B cell (primary cell): ENCODE measurements at regions of chr6 and their contacts with region 1.

Region 1: GRCh38 chr6:36851149-36851614 is 11.9 kb upstream of the CPNE5 start:
- DNase-seq: peak; percentile 69
- ATAC-seq: peak; percentile 43
- H3K4me3 ChIP-seq: no peak overlapping the region
- H3K4me3 Mint-ChIP-seq: no peak overlapping the region
- H3K27ac ChIP-seq: no peak overlapping the region
- H3K27ac Mint-ChIP-seq: no peak overlapping the region
- H3K4me1 ChIP-seq: peaks cover 0 to 8% of the 10 kb centered on the region in 2 donors
- H3K4me1 Mint-ChIP-seq: peaks cover 8% of the 10 kb centered on the region
- H3K27me3 ChIP-seq: peaks cover 0 to 11% (median 5%) of the 10 kb centered on the region in 4 experiments
- H3K27me3 Mint-ChIP-seq: peaks cover 3% of the 10 kb centered on the region
- CTCF ChIP-seq: peak; percentile 83

Region 2: DNA sequence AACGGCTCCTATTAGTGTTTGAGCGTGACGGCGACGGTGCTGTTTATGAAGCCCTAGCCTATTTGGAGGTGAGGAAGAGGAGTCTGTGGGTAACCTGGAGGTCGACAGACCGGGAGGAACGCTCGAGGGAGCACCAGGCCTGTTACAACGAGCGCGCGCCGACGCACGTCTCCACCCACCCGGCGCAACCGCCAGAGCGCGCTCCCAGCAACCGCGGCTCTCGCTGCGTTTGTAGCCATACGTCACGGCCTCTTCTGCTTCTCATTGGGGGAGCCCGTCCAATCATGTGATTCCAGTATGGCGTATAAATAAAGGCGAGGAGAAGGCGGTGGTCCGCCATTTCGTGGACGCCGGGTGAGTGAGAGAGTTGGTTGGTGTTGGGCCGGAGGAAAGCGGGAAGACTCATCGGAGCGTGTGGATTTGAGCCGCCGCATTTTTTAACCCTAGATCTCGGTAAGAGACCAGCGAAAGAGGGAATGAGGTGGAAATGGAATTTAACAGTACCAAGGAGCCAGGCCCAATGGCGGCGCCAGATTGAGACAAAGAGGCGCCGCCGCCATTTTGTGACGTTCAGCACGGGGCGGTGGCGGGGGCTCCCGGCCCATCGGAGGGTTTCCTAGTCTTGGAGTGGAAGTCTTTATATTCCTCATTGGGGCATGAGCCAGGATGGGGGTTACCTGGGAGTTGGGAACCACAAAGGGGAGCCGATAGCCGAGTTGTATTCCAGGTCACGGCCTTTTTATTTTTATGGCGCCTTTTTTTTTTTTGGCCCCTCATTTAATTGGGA is 257.0 kb before region 1 on chr6 and contains the start of gene SRSF3:
- CTCF ChIA-PET with region 1: no interaction called
- POLR2A ChIA-PET with region 1: no interaction called
- intact Hi-C with region 1: no loop called
- DNase-seq: peak; percentile 99
- ATAC-seq: peak; percentile 91
- H3K4me3 ChIP-seq: peak within 1 kb of the TSS; percentile 91 to 100 (median 97)
- H3K4me3 Mint-ChIP-seq: peak within 1 kb of the TSS; percentile 90
- H3K27ac ChIP-seq: peak within 1 kb of the TSS; percentile 93 to 99
- H3K27ac Mint-ChIP-seq: peak within 1 kb of the TSS; percentile 97
- H3K4me1 ChIP-seq: peaks cover 44 to 55% of the 10 kb centered on the region in 2 donors
- H3K4me1 Mint-ChIP-seq: peaks cover 48% of the 10 kb centered on the region
- H3K27me3 ChIP-seq: no peaks in the 10 kb centered on the region
- H3K27me3 Mint-ChIP-seq: no peaks in the 10 kb centered on the region
- CTCF ChIP-seq: peak; percentile 29
- total RNA-seq, gene SRSF3: 316 and 331 TPM in 2 replicates

Region 3: GRCh38 chr6:36765594-36766398 is 85.4 kb before region 1 on chr6:
- CTCF ChIA-PET with region 1: interaction called, 92 read pairs
- POLR2A ChIA-PET with region 1: no interaction called
- intact Hi-C with region 1: loop called (anchors 1 kb)
- DNase-seq: peak; percentile 88
- ATAC-seq: peak; percentile 91
- H3K4me3 ChIP-seq: peak overlapping the region in 1 of 5 experiments; percentile 9
- H3K4me3 Mint-ChIP-seq: peak overlapping the region; percentile 60
- H3K27ac ChIP-seq: no peak overlapping the region
- H3K27ac Mint-ChIP-seq: peak overlapping the region; percentile 60
- H3K4me1 ChIP-seq: peaks cover 45 to 54% of the 10 kb centered on the region in 2 donors
- H3K4me1 Mint-ChIP-seq: peaks cover 41% of the 10 kb centered on the region
- H3K27me3 ChIP-seq: peaks cover 0 to 3% (median 0%) of the 10 kb centered on the region in 4 experiments
- H3K27me3 Mint-ChIP-seq: no peaks in the 10 kb centered on the region
- CTCF ChIP-seq: peak; percentile 92

Region 4: DNA sequence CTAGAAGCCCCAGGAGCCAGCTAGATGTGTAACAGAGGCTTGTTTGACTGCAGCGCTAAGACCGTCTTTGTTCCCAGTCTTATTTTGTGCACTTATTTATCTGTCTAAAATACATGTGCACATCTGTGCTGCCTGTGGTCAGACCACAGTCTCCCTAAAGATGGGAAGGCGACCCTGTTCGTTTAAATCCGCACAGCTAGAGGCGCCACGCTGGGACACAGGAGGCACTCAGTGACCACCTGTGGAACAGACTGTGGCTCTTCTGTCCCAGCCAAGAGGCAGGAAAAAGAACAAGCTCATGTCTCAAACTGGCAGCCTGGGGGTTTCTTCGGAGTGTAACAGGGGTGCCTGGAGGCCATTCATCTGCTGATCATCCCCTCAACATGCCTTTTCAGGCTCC is 78.8 kb before region 1 on chr6:
- CTCF ChIA-PET with region 1: interaction called, 92 read pairs
- POLR2A ChIA-PET with region 1: no interaction called
- intact Hi-C with region 1: no loop called
- DNase-seq: no peak
- ATAC-seq: no peak
- H3K4me3 ChIP-seq: no peak overlapping the region
- H3K4me3 Mint-ChIP-seq: no peak overlapping the region
- H3K27ac ChIP-seq: no peak overlapping the region
- H3K27ac Mint-ChIP-seq: no peak overlapping the region
- H3K4me1 ChIP-seq: peaks cover 25 to 27% of the 10 kb centered on the region in 2 donors
- H3K4me1 Mint-ChIP-seq: peaks cover 24% of the 10 kb centered on the region
- H3K27me3 ChIP-seq: peaks cover 0 to 9% (median under 1%) of the 10 kb centered on the region in 4 experiments
- H3K27me3 Mint-ChIP-seq: peaks cover 24% of the 10 kb centered on the region
- CTCF ChIP-seq: no peak

Region 5: DNA sequence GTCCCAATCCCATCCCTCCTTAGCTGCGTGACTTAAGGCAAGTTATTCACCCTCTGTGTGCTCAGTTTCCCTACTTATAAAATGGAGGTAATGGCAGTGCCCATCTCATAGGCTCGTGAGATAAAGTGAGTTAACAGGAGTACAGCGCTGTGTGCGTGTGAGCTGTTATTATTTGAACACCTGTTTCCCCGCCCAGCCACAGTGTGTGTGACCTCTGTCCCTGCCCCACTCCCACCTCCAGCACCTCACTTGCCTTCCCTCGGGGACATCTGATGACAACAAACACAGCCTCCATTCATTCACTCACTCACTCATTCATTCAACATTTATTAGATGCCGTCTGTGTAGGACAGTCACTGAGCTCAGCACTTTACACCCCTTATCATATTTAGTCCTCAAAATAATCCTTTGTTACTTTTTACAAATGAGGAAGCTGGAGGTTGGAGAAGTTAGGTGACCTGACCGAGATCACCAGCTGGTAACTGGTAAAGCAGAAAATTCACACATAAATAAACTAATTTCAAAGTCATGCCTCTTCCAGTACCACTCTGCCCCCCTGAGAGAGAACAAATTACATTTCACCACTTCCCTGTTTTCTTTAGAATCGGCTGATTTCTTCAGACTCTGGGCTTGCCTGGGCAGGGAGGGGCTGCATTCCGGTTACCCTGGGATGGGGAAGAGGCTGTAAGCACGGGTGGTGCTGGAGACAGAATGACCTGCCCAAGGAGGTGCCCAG is 70.6 kb before region 1 on chr6:
- CTCF ChIA-PET with region 1: interaction called, 22 read pairs
- POLR2A ChIA-PET with region 1: no interaction called
- intact Hi-C with region 1: no loop called
- DNase-seq: peak; percentile 54
- ATAC-seq: peak; percentile 42
- H3K4me3 ChIP-seq: no peak overlapping the region
- H3K4me3 Mint-ChIP-seq: peak overlapping the region; percentile 64
- H3K27ac ChIP-seq: peak overlapping the region in 1 of 2 donors; percentile 10
- H3K27ac Mint-ChIP-seq: peak overlapping the region; percentile 71
- H3K4me1 ChIP-seq: peaks cover 21 to 28% of the 10 kb centered on the region in 2 donors
- H3K4me1 Mint-ChIP-seq: peaks cover 27% of the 10 kb centered on the region
- H3K27me3 ChIP-seq: peaks cover 0 to 9% (median 0%) of the 10 kb centered on the region in 4 experiments
- H3K27me3 Mint-ChIP-seq: peaks cover 17% of the 10 kb centered on the region
- CTCF ChIP-seq: no peak

Region 6: GRCh38 chr6:36874443-36875249 is 23.5 kb after region 1 on chr6 and contains the start of gene PPIL1:
- CTCF ChIA-PET with region 1: interaction called, 20 read pairs
- POLR2A ChIA-PET with region 1: no interaction called
- intact Hi-C with region 1: no loop called
- DNase-seq: peak; percentile 96
- ATAC-seq: peak; percentile 93
- H3K4me3 ChIP-seq: peak within 1 kb of the TSS; percentile 73 to 100 (median 99)
- H3K4me3 Mint-ChIP-seq: peak within 1 kb of the TSS; percentile 99
- H3K27ac ChIP-seq: peak within 1 kb of the TSS; percentile 63 to 89
- H3K27ac Mint-ChIP-seq: peak within 1 kb of the TSS; percentile 97
- H3K4me1 ChIP-seq: peaks cover 12 to 15% of the 10 kb centered on the region in 2 donors
- H3K4me1 Mint-ChIP-seq: peaks cover 32% of the 10 kb centered on the region
- H3K27me3 ChIP-seq: peaks cover 0 to 3% (median under 1%) of the 10 kb centered on the region in 4 experiments
- H3K27me3 Mint-ChIP-seq: no peaks in the 10 kb centered on the region
- CTCF ChIP-seq: no peak
- total RNA-seq, gene PPIL1: 7.0 and 10.5 TPM in 2 replicates

Region 7: DNA sequence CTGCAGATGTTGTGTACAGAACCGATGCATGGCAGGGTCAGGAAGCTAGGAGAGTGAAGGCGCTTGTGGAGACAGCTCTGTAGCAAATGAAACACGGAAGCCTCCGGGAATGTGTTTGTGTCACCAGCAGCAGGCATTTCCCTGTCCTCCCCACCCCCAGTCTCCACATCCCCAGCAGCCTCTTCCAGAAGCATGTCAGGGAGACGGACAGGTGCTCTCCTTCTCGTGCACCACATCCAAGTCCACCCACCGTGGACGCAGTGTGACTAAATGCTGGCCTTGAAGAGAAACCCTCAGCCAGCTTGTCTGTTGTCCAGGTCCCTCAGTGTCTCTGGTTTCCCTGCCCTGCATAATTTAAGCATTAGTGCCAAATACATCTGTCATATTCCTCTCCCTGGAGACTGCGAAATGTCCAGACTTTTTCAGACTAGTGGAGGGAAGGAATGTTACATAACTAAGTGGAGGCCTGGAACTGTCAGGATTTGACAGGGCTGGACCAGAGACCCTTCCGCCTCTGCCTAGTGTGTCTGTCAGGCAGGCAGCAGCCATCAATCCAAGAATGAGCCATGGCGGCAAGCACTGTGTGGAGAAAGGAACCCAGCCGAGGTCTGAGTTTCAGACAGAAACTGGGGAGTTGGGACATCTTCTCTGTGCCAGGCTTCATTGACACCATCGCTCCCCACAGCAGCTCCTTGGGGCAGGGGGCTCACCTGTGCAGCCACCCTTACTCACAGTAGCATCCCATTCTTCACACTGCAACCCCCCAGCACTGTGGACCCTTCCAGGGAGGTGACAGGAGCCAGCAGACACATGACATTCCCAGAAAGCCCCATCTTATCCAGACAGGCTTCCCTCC is 76.7 kb after region 1 on chr6:
- CTCF ChIA-PET with region 1: no interaction called
- POLR2A ChIA-PET with region 1: no interaction called
- intact Hi-C with region 1: no loop called
- DNase-seq: no peak
- ATAC-seq: no peak
- H3K4me3 ChIP-seq: no peak overlapping the region
- H3K4me3 Mint-ChIP-seq: no peak overlapping the region
- H3K27ac ChIP-seq: no peak overlapping the region
- H3K27ac Mint-ChIP-seq: no peak overlapping the region
- H3K4me1 ChIP-seq: no peaks in the 10 kb centered on the region
- H3K4me1 Mint-ChIP-seq: peaks cover 5% of the 10 kb centered on the region
- H3K27me3 ChIP-seq: no peaks in the 10 kb centered on the region
- H3K27me3 Mint-ChIP-seq: no peaks in the 10 kb centered on the region
- CTCF ChIP-seq: no peak